ENCODE measurements at regions of chr4 and their contacts with region 1.

Region 1: GRCh38 chr4:158938220-158939044 is 164.4 kb upstream of the RAPGEF2 start:
- DNase-seq: no peak
- ATAC-seq: no peak
- H3K4me3 Mint-ChIP-seq: no peak overlapping the region
- H3K27ac Mint-ChIP-seq: no peak overlapping the region
- H3K4me1 Mint-ChIP-seq: no peaks in the 10 kb centered on the region
- H3K27me3 Mint-ChIP-seq: peaks cover 6% of the 10 kb centered on the region

Region 2: GRCh38 chr4:158856852-158857251 is 81.6 kb before region 1 on chr4:
- CTCF ChIA-PET with region 1: no interaction called
- POLR2A ChIA-PET with region 1: no interaction called
- intact Hi-C with region 1: no loop called
- DNase-seq: no peak
- ATAC-seq: peak; percentile 87
- H3K4me3 Mint-ChIP-seq: no peak overlapping the region
- H3K27ac Mint-ChIP-seq: no peak overlapping the region
- H3K4me1 Mint-ChIP-seq: peaks cover 2% of the 10 kb centered on the region
- H3K27me3 Mint-ChIP-seq: no peaks in the 10 kb centered on the region

Region 3: GRCh38 chr4:158949099-158949498 is 10.7 kb after region 1 on chr4:
- CTCF ChIA-PET with region 1: interaction called, 4 read pairs
- POLR2A ChIA-PET with region 1: no interaction called
- intact Hi-C with region 1: loop called in 1 of 2 experiments (anchors 1 kb)
- DNase-seq: no peak
- ATAC-seq: no peak
- H3K4me3 Mint-ChIP-seq: no peak overlapping the region
- H3K27ac Mint-ChIP-seq: no peak overlapping the region
- H3K4me1 Mint-ChIP-seq: no peaks in the 10 kb centered on the region
- H3K27me3 Mint-ChIP-seq: peaks cover 16% of the 10 kb centered on the region